Naive thymus-derived CD4-positive, alpha-beta T cell (primary cell): ENCODE measurements at regions of chr16 and their contacts with region 1.

Region 1: GRCh38 chr16:30657866-30658730 is at the start of gene FBRS:
- DNase-seq: peak; percentile 98 to 100 (median 100)
- ATAC-seq: peak; percentile 84
- H3K4me3 ChIP-seq: peak within 1 kb of the TSS; percentile 83
- H3K4me3 Mint-ChIP-seq: peak within 1 kb of the TSS; percentile 81 to 99 (median 96)
- H3K27ac ChIP-seq: peak within 1 kb of the TSS; percentile 94
- H3K27ac Mint-ChIP-seq: peak within 1 kb of the TSS; percentile 99 to 100 (median 100)
- H3K4me1 ChIP-seq: peaks cover 38 to 42% of the 10 kb centered on the region in 2 donors
- H3K4me1 Mint-ChIP-seq: peaks cover 19 to 50% (median 40%) of the 10 kb centered on the region in 7 donors
- H3K27me3 ChIP-seq: no peaks in the 10 kb centered on the region
- H3K27me3 Mint-ChIP-seq: no peaks in the 10 kb centered on the region
- total RNA-seq, gene FBRS: 143 to 174 (median 164) TPM

Region 2: DNA sequence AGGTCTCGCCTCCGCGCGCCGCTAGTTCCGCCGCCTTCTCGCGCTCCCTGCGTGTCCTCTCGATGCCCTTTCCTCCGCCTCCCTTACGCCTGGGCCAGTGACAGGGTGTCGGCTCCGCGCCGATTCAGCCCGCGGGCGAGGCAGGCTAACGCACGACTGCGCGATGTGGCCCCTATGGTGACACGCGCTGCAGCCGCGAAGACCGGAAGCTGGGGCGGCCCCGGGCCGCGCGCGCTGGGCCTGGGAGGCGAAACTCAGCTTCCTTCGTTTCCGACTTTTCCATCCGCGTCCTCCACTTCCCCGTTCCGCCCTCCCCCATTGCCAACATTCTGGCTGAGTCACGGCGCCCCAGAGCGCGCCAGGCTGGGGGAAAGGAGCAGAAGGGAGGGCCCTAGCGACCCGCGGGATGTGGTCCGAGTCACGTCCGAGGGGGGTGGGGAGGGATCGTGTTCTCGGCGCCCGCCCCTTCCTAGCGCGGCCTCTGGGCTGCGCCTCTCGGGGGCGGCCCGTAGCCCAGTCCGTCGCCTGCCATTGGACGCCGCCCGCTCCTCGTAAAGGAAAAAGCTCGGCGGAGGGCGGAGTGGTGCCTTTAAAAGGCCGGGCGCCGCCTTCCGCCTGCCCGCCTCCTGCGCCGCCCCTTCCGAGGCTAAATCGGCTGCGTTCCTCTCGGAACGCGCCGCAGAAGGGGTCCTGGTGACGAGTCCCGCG is 592.8 kb before region 1 on chr16 and contains the start of gene ALDOA:
- CTCF ChIA-PET with region 1: no interaction called
- POLR2A ChIA-PET with region 1: interaction called, 6 read pairs
- intact Hi-C with region 1: loop called (anchors 1 to 2 kb)
- DNase-seq: peak; percentile 82 to 97 (median 92)
- ATAC-seq: peak; percentile 90
- H3K4me3 ChIP-seq: peak within 1 kb of the TSS; percentile 94
- H3K4me3 Mint-ChIP-seq: peak within 1 kb of the TSS; percentile 96 to 100 (median 99)
- H3K27ac ChIP-seq: peak within 1 kb of the TSS; percentile 83
- H3K27ac Mint-ChIP-seq: peak within 1 kb of the TSS; percentile 90 to 99 (median 98)
- H3K4me1 ChIP-seq: peaks cover 13 to 37% of the 10 kb centered on the region in 2 donors
- H3K4me1 Mint-ChIP-seq: peaks cover 22 to 43% (median 35%) of the 10 kb centered on the region in 7 donors
- H3K27me3 ChIP-seq: no peaks in the 10 kb centered on the region
- H3K27me3 Mint-ChIP-seq: no peaks in the 10 kb centered on the region
- total RNA-seq, gene ALDOA: 356 to 1,619 (median 584) TPM

Region 3: GRCh38 chr16:30149250-30149930 is 508.7 kb before region 1 on chr16:
- CTCF ChIA-PET with region 1: no interaction called
- POLR2A ChIA-PET with region 1: no interaction called
- intact Hi-C with region 1: no loop called
- DNase-seq: no peak
- ATAC-seq: peak; percentile 45
- H3K4me3 ChIP-seq: no peak overlapping the region
- H3K4me3 Mint-ChIP-seq: peak overlapping the region in 1 of 10 donors; percentile 34
- H3K27ac ChIP-seq: no peak overlapping the region
- H3K27ac Mint-ChIP-seq: no peak overlapping the region
- H3K4me1 ChIP-seq: no peaks in the 10 kb centered on the region
- H3K4me1 Mint-ChIP-seq: peaks cover 0 to 6% (median 4%) of the 10 kb centered on the region in 7 donors
- H3K27me3 ChIP-seq: peaks cover 0 to 4% of the 10 kb centered on the region in 2 donors
- H3K27me3 Mint-ChIP-seq: peaks cover 0 to 4% (median 0%) of the 10 kb centered on the region in 5 donors

Region 4: GRCh38 chr16:30429678-30430427 is 228.2 kb before region 1 on chr16 and contains the start of gene DCTPP1:
- CTCF ChIA-PET with region 1: no interaction called
- POLR2A ChIA-PET with region 1: interaction called, 7 read pairs
- intact Hi-C with region 1: loop called (anchors 1 kb)
- DNase-seq: peak; percentile 79 to 99 (median 97)
- ATAC-seq: peak; percentile 98
- H3K4me3 ChIP-seq: peak within 1 kb of the TSS; percentile 67
- H3K4me3 Mint-ChIP-seq: no peak within 1 kb of the TSS
- H3K27ac ChIP-seq: peak within 1 kb of the TSS; percentile 85
- H3K27ac Mint-ChIP-seq: peak within 1 kb of the TSS in 1 of 9 donors; percentile 38
- H3K4me1 ChIP-seq: peaks cover 16 to 19% of the 10 kb centered on the region in 2 donors
- H3K4me1 Mint-ChIP-seq: peaks cover 14 to 29% (median 21%) of the 10 kb centered on the region in 7 donors
- H3K27me3 ChIP-seq: no peaks in the 10 kb centered on the region
- H3K27me3 Mint-ChIP-seq: no peaks in the 10 kb centered on the region
- total RNA-seq, gene DCTPP1: 11.6 to 74.1 (median 13.8) TPM

Region 5: DNA sequence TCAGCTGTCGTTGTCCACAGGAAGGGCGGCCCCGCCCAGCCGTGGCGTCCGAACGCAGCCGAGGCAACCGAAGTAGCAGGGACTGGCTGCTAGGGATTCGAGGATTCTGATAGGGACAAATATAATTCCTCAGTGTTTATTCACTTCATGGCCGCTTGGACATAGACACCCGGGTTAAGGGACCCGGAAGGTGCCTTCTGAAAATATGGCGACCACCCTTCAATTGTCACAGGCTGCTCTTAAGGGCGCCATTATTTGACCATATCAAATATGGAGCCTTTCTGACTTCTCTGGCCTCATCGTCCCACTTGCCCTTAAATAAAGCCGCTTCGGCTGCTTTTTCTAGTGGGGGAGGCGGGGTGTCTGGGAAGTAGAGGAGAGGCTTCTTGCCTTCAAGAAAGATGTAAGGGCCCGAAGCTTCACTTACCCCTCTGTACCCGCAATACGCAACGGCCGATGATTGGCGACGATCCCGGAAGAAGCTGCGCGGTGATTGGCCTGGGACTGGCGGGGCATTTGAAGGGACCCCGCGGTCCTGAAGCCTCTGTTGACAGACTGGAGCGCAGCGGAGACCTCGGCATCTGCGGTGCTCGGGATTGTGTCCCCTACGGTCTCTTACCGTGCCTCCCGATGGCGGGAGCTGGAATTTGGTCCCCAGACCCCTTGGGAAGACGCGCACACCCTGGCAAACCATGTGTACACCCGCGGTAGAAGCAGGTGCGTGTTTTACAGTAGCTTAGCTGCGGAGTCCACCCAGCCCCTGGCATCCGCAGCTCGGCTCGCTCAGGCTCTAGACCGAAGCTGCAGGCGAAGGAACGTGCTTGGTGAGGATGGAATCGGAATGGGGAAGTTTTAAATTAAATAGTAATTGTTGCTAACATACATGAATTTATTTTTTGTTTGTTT is 86.2 kb before region 1 on chr16 and contains the start of gene ZNF688:
- CTCF ChIA-PET with region 1: no interaction called
- POLR2A ChIA-PET with region 1: interaction called, 26 read pairs
- intact Hi-C with region 1: loop called (anchors 1 kb)
- DNase-seq: peak; percentile 74 to 99 (median 97)
- ATAC-seq: peak; percentile 89
- H3K4me3 ChIP-seq: peak within 1 kb of the TSS; percentile 88
- H3K4me3 Mint-ChIP-seq: peak within 1 kb of the TSS; percentile 87 to 98 (median 90)
- H3K27ac ChIP-seq: peak within 1 kb of the TSS; percentile 94
- H3K27ac Mint-ChIP-seq: peak within 1 kb of the TSS; percentile 92 to 98 (median 95)
- H3K4me1 ChIP-seq: peaks cover 36 to 38% of the 10 kb centered on the region in 2 donors
- H3K4me1 Mint-ChIP-seq: peaks cover 17 to 51% (median 39%) of the 10 kb centered on the region in 7 donors
- H3K27me3 ChIP-seq: no peaks in the 10 kb centered on the region
- H3K27me3 Mint-ChIP-seq: no peaks in the 10 kb centered on the region
- total RNA-seq, gene ZNF688: 8.8 to 24.3 (median 16.3) TPM

Region 6: GRCh38 chr16:30692381-30693064 is 34.4 kb after region 1 on chr16:
- CTCF ChIA-PET with region 1: interaction called, 50 read pairs
- POLR2A ChIA-PET with region 1: interaction called, 113 read pairs
- intact Hi-C with region 1: loop called (anchors 1 kb)
- DNase-seq: no peak
- ATAC-seq: no peak
- H3K4me3 ChIP-seq: no peak overlapping the region
- H3K4me3 Mint-ChIP-seq: no peak overlapping the region
- H3K27ac ChIP-seq: no peak overlapping the region
- H3K27ac Mint-ChIP-seq: peak overlapping the region in 2 of 9 donors; percentile 2 to 20
- H3K4me1 ChIP-seq: peaks cover 3 to 16% of the 10 kb centered on the region in 2 donors
- H3K4me1 Mint-ChIP-seq: peaks cover 15 to 27% (median 21%) of the 10 kb centered on the region in 7 donors
- H3K27me3 ChIP-seq: no peaks in the 10 kb centered on the region
- H3K27me3 Mint-ChIP-seq: no peaks in the 10 kb centered on the region

Region 7: DNA sequence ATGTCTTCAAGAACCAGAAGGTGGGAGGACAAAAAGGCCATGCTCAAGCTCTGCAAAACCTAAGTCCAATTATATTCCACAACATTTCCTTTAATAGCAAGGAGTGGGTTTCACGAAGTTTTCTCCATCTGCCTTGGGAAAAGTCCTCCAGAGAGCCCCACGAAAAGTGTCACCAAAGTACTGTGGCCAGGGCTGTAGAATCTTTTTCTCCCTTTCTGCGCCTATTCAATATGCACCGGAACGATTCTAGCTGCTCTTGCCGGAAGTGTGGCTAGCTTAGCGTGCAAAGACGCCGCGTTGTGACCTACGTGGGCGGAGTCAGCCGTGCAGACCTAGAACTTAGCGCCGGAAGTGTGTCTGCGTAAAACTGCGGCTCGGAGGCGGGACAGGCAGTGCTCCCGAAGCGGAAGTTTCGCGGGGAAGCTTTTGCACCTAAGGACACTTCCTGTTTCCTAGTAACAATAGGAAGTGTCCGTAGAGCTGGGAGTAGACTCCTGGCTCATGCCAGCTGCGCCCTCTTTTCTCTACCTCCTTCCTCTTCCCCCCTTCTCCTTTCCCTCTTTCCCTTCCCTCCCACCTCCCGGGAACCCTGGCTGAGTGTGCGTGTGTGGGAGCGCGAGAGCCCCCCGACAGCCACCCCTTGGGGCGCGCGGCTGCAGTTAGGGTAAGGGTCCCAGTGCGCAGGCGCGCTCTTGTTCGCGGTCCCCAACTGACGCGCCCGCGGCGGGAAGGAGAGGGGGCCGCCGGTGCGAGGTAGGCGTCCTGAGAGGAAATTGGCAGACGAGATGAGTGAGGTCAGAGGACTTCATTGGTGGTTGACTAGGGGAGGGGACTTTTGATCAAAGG is 416.1 kb after region 1 on chr16 and contains the starts of genes ZNF646 and ZNF668:
- CTCF ChIA-PET with region 1: no interaction called
- POLR2A ChIA-PET with region 1: interaction called, 4 read pairs
- intact Hi-C with region 1: loop called in 1 of 2 experiments (anchors 1 kb)
- DNase-seq: peak; percentile 84 to 99 (median 96)
- ATAC-seq: peak; percentile 90
- H3K4me3 ChIP-seq: peak within 1 kb of the TSS; percentile 89
- H3K4me3 Mint-ChIP-seq: peak within 1 kb of the TSS; percentile 85 to 99 (median 96)
- H3K27ac ChIP-seq: peak within 1 kb of the TSS; percentile 91
- H3K27ac Mint-ChIP-seq: peak within 1 kb of the TSS; percentile 92 to 98 (median 97)
- H3K4me1 ChIP-seq: peaks cover 9 to 18% of the 10 kb centered on the region in 2 donors
- H3K4me1 Mint-ChIP-seq: peaks cover 32 to 48% (median 36%) of the 10 kb centered on the region in 7 donors
- H3K27me3 ChIP-seq: no peaks in the 10 kb centered on the region
- H3K27me3 Mint-ChIP-seq: no peaks in the 10 kb centered on the region
- total RNA-seq, gene ZNF646: 22.2 to 49.1 (median 30.4) TPM
- total RNA-seq, gene ZNF668: 10.7 to 15.2 (median 12.6) TPM